ENCODE measurements at regions of chr2 and their contacts with region 1.

Region 1: DNA sequence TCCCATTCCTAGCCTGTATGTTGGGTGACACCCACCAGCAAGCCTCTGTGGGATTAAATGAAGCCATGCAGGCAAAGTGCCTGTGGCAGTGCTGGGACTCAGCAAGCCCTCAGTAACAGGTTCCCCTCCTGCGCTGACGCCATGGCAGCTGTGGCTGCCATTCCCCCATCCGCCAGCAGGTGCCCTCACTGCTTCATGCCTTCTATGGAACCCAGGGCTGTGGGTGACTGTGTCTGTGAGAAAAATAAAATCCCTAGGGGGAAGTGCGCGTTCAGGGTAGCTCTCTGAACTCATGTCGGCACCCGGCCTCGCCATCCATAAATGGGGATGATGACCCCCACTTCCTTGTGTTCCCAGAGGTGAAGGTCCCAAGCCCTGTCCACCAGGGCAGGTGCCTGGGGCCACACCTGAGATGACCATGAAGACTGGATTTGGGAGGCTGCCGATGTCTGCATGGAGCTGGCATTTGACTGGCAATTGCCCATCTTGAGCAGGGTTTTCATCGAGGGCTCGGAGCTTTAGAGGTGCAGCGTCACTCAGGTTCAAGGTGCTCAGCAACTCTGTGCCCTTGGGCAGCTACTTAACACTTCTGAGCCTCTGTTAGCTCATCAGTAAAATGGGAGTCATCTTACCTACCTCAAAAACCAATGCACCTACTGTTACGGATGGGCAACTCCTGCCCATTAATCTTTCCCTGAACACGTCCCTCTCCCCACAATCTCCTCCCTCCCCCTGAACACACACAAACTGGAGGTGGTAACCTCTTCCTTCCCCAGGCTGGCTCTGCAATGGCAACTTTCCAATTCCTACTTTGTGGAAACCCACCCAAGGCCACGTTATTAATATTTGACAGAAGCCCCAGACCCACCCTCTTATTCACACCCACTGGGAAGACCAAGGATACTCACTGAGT is 2.9 kb upstream of the MAL start:
- DNase-seq: peak; percentile 91
- H3K4me3 Mint-ChIP-seq: peak overlapping the region; percentile 100
- H3K27ac Mint-ChIP-seq: peak overlapping the region; percentile 87
- H3K4me1 Mint-ChIP-seq: peaks cover 54% of the 10 kb centered on the region
- H3K27me3 Mint-ChIP-seq: peaks cover 8% of the 10 kb centered on the region

Region 2: DNA sequence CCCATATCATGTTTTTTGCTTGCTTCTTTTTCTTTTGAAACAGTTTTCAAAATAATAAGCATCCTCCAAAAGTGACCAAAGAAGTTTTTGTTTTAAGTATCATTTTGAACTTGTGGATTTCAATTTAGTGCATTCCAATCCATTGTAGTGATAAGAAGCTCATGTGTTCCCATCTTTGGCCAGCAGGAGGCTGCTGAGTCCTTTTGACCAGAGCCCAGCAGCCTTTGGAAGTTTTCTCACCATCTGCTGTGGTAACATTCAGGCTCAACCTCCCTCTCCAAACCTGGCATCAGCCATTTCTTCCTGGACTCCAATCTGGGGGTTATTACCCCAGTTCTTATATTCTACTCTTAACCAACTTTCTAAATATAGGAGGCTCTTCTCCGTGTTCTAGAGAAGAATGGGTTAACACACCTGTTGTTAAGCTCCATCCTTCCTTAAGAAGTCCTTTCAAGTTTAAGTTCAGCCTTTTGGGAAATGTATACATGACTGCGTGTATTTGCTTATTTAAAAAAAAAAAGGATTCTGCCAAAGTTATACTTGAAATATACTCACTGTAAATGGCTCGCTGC is 36.1 kb before region 1 on chr2:
- CTCF ChIA-PET with region 1: interaction called, 15 read pairs
- DNase-seq: peak; percentile 70
- H3K4me3 Mint-ChIP-seq: no peak overlapping the region
- H3K27ac Mint-ChIP-seq: no peak overlapping the region
- H3K4me1 Mint-ChIP-seq: peaks cover 3% of the 10 kb centered on the region
- H3K27me3 Mint-ChIP-seq: peaks cover 29% of the 10 kb centered on the region

Region 3: DNA sequence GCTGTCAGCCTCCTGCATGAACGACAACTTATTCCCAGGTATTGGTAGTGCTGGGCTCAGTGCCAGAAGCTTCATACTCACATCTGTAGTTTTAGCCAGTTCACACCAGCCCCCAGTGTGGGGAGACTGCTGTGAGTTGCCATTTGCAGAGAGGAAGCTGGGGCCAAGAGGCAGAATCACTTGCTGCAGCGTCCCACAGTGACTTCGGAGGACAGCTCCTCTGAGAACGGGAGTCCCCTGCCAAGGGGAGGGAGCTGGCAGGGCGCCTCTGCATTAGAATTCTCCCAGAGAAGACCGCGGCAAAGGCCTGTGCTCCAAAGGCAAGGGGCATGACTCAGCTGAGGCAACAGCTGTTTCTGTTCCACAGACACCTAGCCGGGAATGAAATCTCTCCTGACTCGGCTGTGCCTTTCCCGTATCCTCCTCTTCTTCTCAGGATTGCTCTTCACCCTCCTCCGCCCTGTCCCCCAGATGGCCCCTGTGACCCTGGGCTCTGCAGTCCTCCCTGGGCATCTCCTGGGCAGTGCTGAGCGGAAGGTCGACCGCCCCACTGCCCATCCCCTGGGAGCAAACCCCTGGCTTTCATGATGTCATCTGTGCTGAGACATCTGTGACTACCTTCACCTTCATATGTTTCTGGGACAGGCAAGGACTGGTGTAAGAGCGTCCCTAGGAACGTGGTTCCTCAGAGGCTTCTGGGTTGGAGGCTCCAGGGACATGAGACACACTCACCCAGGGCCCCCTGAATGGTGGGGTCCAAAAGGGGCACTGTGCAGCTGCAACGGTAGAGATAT is 20.9 kb after region 1 on chr2:
- CTCF ChIA-PET with region 1: interaction called, 11 read pairs
- DNase-seq: no peak
- H3K4me3 Mint-ChIP-seq: no peak overlapping the region
- H3K27ac Mint-ChIP-seq: peak overlapping the region; percentile 67
- H3K4me1 Mint-ChIP-seq: peaks cover 82% of the 10 kb centered on the region
- H3K27me3 Mint-ChIP-seq: no peaks in the 10 kb centered on the region

Region 4: DNA sequence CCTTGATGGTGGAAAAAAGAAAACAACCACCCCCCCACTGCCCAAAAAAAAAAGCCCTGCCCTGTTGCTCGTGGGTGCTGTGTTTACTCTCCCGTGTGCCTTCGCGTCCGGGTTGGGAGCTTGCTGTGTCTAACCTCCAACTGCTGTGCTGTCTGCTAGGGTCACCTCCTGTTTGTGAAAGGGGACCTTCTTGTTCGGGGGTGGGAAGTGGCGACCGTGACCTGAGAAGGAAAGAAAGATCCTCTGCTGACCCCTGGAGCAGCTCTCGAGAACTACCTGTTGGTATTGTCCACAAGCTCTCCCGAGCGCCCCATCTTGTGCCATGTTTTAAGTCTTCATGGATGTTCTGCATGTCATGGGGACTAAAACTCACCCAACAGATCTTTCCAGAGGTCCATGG is 31.0 kb after region 1 on chr2:
- CTCF ChIA-PET with region 1: interaction called, 46 read pairs
- DNase-seq: peak; percentile 33
- H3K4me3 Mint-ChIP-seq: no peak overlapping the region
- H3K27ac Mint-ChIP-seq: peak overlapping the region; percentile 6
- H3K4me1 Mint-ChIP-seq: peaks cover 85% of the 10 kb centered on the region
- H3K27me3 Mint-ChIP-seq: peaks cover 6% of the 10 kb centered on the region

Region 5: DNA sequence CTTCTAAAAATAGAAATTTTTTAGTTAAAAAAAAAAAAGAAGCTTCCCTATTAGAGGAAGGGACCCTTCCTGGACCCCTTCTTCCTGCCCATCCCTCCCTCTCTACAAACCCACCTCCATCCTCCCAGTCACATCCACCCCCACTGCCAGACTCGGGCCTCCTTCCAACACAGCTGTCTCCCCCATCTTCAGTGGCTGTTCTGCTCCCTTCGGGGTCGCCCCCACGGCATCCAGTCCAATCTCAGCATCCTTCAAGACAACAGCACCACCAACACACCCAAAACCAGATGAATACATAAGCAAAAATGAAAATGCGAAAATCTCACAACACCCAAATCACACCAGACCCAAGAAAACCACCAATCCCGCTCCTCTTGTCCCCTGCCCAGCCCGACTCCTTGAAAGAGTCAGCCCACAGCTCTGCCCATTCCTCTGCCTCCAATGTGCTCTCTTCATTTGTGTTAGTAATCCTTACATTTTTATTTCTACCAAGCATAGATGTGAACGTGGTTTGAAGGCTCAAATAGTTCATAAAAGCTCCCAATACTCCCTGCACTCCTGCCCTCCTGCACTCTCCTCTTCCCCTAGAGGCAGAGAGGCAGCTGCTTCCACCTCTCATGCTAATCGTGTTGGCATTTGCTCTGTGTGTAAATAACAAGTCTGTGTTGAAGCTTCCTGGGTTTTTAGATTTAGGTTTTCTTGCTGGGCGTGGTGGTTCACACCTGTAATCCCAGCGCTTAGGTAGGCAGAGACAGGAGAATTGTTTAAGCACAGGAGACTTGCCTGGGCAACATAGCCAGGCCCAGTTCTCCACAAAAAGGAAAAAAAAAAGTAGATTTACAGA is 39.9 kb after region 1 on chr2:
- CTCF ChIA-PET with region 1: interaction called, 46 read pairs
- DNase-seq: no peak
- H3K4me3 Mint-ChIP-seq: peak overlapping the region; percentile 1
- H3K27ac Mint-ChIP-seq: peak overlapping the region; percentile 90
- H3K4me1 Mint-ChIP-seq: peaks cover 54% of the 10 kb centered on the region
- H3K27me3 Mint-ChIP-seq: peaks cover 7% of the 10 kb centered on the region

Region 6: DNA sequence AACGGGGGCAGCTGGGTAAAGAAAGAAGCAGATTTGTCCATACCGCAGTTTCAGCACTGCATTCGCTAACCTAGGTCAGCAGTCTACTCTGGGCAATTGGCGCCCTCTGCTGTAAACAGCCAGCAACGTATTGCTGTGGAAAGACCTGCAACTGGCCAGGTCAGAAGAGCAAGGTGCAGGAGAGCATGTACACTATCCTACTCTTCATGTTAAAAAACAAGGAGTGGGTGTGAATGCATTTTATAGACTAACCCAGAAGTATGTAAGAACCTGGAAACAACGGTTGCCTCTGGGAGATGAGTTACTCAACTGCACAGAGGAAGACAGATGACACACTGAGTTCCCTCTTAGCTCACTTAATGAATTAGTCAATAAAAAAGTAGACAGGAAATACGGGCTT is 92.9 kb after region 1 on chr2:
- CTCF ChIA-PET with region 1: interaction called, 190 read pairs
- DNase-seq: peak; percentile 88
- H3K4me3 Mint-ChIP-seq: no peak overlapping the region
- H3K27ac Mint-ChIP-seq: peak overlapping the region; percentile 47
- H3K4me1 Mint-ChIP-seq: peaks cover 44% of the 10 kb centered on the region
- H3K27me3 Mint-ChIP-seq: no peaks in the 10 kb centered on the region